ENCODE measurements at regions of chr4 and their contacts with region 1.

Region 1: DNA sequence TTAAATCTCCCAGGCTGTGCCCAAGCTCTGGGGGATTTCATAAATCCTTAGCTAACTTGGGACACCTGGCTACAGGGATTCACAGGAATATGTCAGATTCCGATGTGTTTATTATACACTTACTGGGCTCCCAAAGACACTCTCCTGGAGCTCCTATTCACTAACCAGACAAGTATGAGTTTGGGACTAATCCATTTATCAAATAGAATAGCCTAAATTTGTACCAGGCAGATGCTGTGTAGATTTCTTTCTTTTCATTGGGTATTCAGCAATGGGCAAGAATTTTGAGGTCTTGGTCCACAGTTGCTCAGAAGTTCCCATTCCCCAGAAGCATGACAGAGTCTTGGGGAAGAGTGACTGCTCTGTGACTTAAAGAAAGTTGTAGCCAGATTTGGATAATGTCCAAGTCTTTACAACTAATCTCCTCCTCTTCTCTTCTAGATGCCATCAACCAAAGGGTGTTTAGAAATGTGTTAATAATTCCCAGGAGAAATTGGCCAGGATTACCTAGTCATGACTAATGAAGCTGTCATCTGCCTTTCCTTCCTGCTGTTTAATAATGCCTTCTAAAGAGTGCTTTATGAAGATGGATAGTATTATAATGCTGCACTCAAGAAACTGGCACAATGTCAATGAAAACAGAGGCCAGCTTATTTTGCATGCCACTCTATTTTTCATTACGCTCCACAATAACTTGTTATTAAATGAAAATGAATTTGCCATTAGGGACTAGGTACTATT is 120.9 kb downstream of the CHIC2 start:
- DNase-seq: no peak
- ATAC-seq: peak in 1 of 8 donors; percentile 56
- H3K4me3 ChIP-seq: no peak overlapping the region
- H3K27ac ChIP-seq: no peak overlapping the region
- H3K4me1 ChIP-seq: peaks cover 0 to 14% (median 0%) of the 10 kb centered on the region in 9 donors
- H3K27me3 ChIP-seq: peaks cover 0 to 9% (median 0%) of the 10 kb centered on the region in 7 donors
- CTCF ChIP-seq: no peak

Region 2: DNA sequence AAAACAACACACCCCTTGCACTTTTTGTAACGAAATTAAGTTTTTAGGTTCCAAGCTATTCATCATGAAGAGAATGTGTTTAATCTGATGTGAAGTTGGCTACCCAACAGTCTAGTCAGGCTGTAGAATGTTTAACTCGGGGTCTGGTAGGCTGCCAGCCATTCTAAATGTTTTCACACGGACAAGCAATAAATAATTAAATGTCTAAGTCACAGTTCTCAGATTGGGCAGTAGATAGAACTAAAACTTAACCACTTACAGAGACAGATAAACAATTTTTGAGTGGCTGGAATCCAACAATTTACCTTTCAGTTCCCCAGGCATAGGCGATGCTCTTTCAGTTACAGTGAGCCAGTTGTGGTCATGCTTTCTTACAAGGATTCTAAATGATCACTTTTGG is 54.4 kb after region 1 on chr4:
- intact Hi-C with region 1: loop called in 1 of 10 experiments (anchors 10 kb)
- DNase-seq: no peak
- ATAC-seq: no peak
- H3K4me3 ChIP-seq: no peak overlapping the region
- H3K27ac ChIP-seq: no peak overlapping the region
- H3K4me1 ChIP-seq: peaks cover 0 to 24% (median 0%) of the 10 kb centered on the region in 9 donors
- H3K27me3 ChIP-seq: no peaks in the 10 kb centered on the region
- CTCF ChIP-seq: no peak

Region 3: DNA sequence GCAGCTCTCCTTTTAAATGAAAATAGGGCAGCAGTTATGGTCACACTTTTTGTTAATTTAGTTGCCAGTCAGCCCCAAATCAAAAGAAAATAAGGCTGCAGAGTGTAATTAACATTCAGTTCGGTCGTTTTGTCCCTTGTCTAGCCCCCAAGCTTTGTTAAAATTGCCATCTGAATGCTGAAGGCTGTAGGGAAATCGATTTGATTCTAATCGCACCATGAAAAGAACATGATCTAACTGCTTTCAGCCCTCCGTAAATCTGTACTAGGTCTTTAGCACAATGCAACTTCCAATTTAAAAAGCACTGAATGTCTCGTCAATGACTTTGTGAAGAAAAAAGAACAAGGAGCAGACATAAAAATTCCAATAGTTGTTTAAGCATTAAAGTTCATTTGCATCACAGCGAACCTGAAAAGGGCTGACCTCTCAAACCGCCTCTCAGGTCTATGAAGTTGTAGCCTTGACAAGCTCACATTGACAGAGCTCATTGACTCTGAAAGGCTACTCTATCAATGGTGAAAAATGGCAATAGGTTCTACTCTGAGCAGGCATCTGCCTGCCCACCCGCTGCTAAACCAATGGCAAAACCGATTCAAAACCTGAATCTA is 72.0 kb after region 1 on chr4:
- intact Hi-C with region 1: no loop called
- DNase-seq: no peak
- ATAC-seq: no peak
- H3K4me3 ChIP-seq: no peak overlapping the region
- H3K27ac ChIP-seq: no peak overlapping the region
- H3K4me1 ChIP-seq: peaks cover 0 to 11% (median 0%) of the 10 kb centered on the region in 9 donors
- H3K27me3 ChIP-seq: no peaks in the 10 kb centered on the region
- CTCF ChIP-seq: no peak

Region 4: GRCh38 chr4:54118850-54119589 is 175.5 kb after region 1 on chr4:
- intact Hi-C with region 1: no loop called
- DNase-seq: no peak
- ATAC-seq: no peak
- H3K4me3 ChIP-seq: no peak overlapping the region
- H3K27ac ChIP-seq: no peak overlapping the region
- H3K4me1 ChIP-seq: no peaks in the 10 kb centered on the region
- H3K27me3 ChIP-seq: peaks cover 0 to 48% (median 12%) of the 10 kb centered on the region in 7 donors
- CTCF ChIP-seq: no peak

Measured in heart right ventricle (tissue), 16 donors.